Activated T-helper 1 cell treated with anti-CD3 and anti-CD28 coated beads, Interleukin-12 subunit alpha, Interleukin-12 subunit beta, Interleukin-2, Interleukin-4 antibody, amounts not matched to agents 30 ng/mL and 10 ng/mL and 1 ng/mL, durations not matched to agents 14 hours and 24 hours and 36 hours (primary cell): ENCODE measurements at regions of chr12 and their contacts with region 1.

Region 1: GRCh38 chr12:9948606-9949296 is 16.6 kb upstream of the CLEC2A start:
- DNase-seq: no peak
- H3K4me3 Mint-ChIP-seq: no peak overlapping the region
- H3K27ac Mint-ChIP-seq: peak overlapping the region; percentile 18
- H3K4me1 Mint-ChIP-seq: peaks cover 54% of the 10 kb centered on the region
- H3K27me3 Mint-ChIP-seq: peaks cover 4% of the 10 kb centered on the region

Region 2: GRCh38 chr12:9883175-9883574 is 65.6 kb before region 1 on chr12:
- intact Hi-C with region 1: no loop called
- DNase-seq: no peak
- H3K4me3 Mint-ChIP-seq: no peak overlapping the region
- H3K27ac Mint-ChIP-seq: no peak overlapping the region
- H3K4me1 Mint-ChIP-seq: peaks cover 17% of the 10 kb centered on the region
- H3K27me3 Mint-ChIP-seq: peaks cover 2% of the 10 kb centered on the region

Region 3: DNA sequence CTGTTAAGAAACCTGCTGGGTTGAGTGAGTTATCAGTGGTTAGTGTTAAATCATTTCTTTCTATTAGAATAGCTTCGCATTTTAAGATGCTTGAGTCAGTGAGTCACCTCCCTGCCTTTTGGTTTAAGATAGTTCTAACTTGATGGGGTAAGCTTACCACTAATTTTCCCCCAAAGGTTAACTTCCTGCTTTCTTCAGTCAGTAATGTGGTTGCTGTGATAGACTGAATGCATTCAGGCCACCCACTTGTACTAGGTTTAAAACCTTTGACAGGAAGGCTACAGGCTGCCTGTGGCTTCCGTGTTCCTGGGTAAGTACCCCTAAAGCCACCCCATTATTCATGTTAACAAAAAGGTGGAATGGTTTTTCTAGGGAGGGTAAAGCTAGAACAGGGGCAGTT is 41.9 kb before region 1 on chr12:
- intact Hi-C with region 1: loop called (anchors 2 kb)
- DNase-seq: peak; percentile 23
- H3K4me3 Mint-ChIP-seq: peak overlapping the region; percentile 28
- H3K27ac Mint-ChIP-seq: peak overlapping the region; percentile 69
- H3K4me1 Mint-ChIP-seq: peaks cover 23% of the 10 kb centered on the region
- H3K27me3 Mint-ChIP-seq: peaks cover 2% of the 10 kb centered on the region